ENCODE measurements at regions of chrX and their contacts with region 1.

Region 1: GRCh38 chrX:76172325-76172893 is 453 bp upstream of the PBDC1 start:
- DNase-seq: no peak
- ATAC-seq: peak; percentile 56
- H3K4me3 ChIP-seq: peak overlapping the region; percentile 74
- H3K4me3 Mint-ChIP-seq: peak overlapping the region; percentile 87 to 97 (median 92)
- H3K27ac ChIP-seq: peak overlapping the region; percentile 81
- H3K27ac Mint-ChIP-seq: peak overlapping the region; percentile 92 to 97 (median 95)
- H3K4me1 ChIP-seq: peaks cover 19 to 20% of the 10 kb centered on the region in 2 donors
- H3K4me1 Mint-ChIP-seq: peaks cover 25 to 52% (median 48%) of the 10 kb centered on the region in 7 donors
- H3K27me3 ChIP-seq: no peaks in the 10 kb centered on the region
- H3K27me3 Mint-ChIP-seq: no peaks in the 10 kb centered on the region

Region 2: DNA sequence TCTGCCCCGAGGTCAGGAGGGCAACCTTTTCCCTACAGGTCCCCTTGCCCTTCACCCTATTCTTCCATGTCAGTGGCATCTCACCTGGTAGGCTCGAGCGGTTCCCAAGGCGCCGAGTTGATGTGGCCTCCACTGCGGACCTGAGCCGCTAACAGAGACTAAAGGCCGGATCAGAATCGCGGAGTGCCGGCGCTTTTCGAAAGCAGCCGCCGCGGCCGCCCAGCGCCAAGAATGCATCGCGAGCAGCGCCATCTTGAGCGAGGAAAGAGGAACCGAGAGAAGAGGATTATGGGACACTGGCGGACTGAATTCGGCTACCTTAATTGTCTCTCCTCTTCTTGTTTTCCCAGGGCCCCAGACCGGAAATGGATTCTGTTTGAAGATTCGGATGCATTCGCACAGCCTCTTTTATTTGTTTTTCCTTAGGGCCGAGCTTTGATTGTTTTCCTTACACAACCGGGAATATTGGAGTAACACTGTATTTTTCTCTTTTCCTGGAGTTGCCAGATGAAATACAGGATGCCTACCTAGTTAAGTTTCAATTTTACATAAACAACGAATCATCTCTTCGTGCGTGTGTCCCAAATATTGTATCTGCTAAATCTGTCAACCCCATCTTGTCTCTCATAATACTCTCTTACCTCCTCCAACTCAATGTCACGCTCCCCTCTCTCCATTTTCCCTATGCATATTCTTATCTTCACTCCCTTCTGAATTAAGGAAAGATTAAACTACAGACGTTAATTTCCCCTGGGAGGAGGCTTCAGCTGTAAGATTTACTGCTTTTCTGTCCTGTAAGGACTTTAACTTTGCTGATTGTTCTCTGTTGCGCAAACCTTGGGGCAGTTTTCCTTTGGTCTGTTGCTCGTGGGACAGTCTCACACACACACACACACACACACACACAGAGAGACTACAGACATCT is 1016.1 kb before region 1 on chrX and contains the start of gene ABCB7:
- CTCF ChIA-PET with region 1: no interaction called
- POLR2A ChIA-PET with region 1: interaction called, 4 read pairs
- intact Hi-C with region 1: loop called in 1 of 2 experiments (anchors 5 kb)
- DNase-seq: peak; percentile 24 to 68 (median 59)
- ATAC-seq: peak; percentile 95
- H3K4me3 ChIP-seq: peak within 1 kb of the TSS; percentile 86
- H3K4me3 Mint-ChIP-seq: peak within 1 kb of the TSS; percentile 87 to 100 (median 95)
- H3K27ac ChIP-seq: peak within 1 kb of the TSS; percentile 75
- H3K27ac Mint-ChIP-seq: peak within 1 kb of the TSS; percentile 92 to 100 (median 96)
- H3K4me1 ChIP-seq: no peaks in the 10 kb centered on the region
- H3K4me1 Mint-ChIP-seq: peaks cover 10 to 63% (median 41%) of the 10 kb centered on the region in 7 donors
- H3K27me3 ChIP-seq: no peaks in the 10 kb centered on the region
- H3K27me3 Mint-ChIP-seq: no peaks in the 10 kb centered on the region
- total RNA-seq, gene ABCB7: 19.4 to 33.0 (median 26.3) TPM

Region 3: DNA sequence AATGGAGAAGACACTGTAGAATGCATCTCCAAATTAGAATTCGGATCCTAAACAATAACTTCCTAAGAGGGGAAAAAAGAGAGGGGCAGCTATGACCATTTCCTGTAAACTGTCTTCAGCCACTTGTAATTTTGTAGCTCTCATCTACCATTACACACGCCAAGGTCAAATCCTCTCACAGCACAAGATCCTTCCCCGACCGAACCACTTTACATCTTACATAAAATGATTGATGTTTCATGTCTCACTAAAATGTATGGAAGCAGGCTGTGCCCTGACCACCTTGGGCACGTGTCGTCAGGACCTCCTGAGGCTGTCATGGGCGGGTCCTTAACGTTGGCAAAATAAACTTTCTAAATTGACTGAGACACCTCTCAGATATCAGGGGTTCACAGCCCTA is 23.7 kb before region 1 on chrX:
- CTCF ChIA-PET with region 1: no interaction called
- POLR2A ChIA-PET with region 1: interaction called, 21 read pairs
- intact Hi-C with region 1: no loop called
- DNase-seq: peak in 8 of 9 donors; percentile 25 to 77 (median 63)
- ATAC-seq: peak; percentile 45
- H3K4me3 ChIP-seq: peak overlapping the region; percentile 32
- H3K4me3 Mint-ChIP-seq: peak overlapping the region; percentile 78 to 98 (median 88)
- H3K27ac ChIP-seq: peak overlapping the region; percentile 78
- H3K27ac Mint-ChIP-seq: peak overlapping the region; percentile 93 to 100 (median 99)
- H3K4me1 ChIP-seq: peaks cover 8 to 14% of the 10 kb centered on the region in 2 donors
- H3K4me1 Mint-ChIP-seq: peaks cover 2 to 29% (median 17%) of the 10 kb centered on the region in 7 donors
- H3K27me3 ChIP-seq: no peaks in the 10 kb centered on the region
- H3K27me3 Mint-ChIP-seq: no peaks in the 10 kb centered on the region

Region 4: DNA sequence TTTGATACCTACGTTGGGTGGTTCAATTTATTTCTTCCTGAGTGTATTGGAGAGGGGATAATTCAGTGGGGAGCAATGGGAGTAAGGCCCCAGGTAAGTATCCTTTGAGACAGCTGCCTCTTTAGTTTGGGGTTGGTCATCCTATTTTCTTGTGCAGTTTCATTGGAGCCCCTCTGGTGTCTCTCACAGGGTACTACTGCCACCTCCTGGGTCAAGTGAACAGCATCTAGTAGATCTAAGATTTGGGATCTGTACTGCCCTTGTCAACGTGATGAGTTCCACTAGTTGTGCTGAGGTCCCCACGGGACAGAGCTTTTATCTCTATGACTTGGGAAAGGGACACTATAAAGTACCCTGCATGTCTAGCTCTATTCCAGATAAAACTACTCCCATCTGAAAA is 81.0 kb after region 1 on chrX:
- CTCF ChIA-PET with region 1: interaction called, 3 read pairs
- POLR2A ChIA-PET with region 1: no interaction called
- intact Hi-C with region 1: loop called (anchors 5 kb)
- DNase-seq: peak; percentile 4 to 56 (median 26)
- ATAC-seq: peak; percentile 71
- H3K4me3 ChIP-seq: no peak overlapping the region
- H3K4me3 Mint-ChIP-seq: no peak overlapping the region
- H3K27ac ChIP-seq: no peak overlapping the region
- H3K27ac Mint-ChIP-seq: peak overlapping the region in 1 of 9 donors; percentile 11
- H3K4me1 ChIP-seq: no peaks in the 10 kb centered on the region
- H3K4me1 Mint-ChIP-seq: peaks cover 0 to 4% (median 0%) of the 10 kb centered on the region in 7 donors
- H3K27me3 ChIP-seq: no peaks in the 10 kb centered on the region
- H3K27me3 Mint-ChIP-seq: peaks cover 0 to 3% (median 0%) of the 10 kb centered on the region in 5 donors

Region 5: GRCh38 chrX:76427560-76428242 is 255.3 kb after region 1 on chrX and contains the start of gene MAGEE1:
- CTCF ChIA-PET with region 1: no interaction called
- POLR2A ChIA-PET with region 1: no interaction called
- intact Hi-C with region 1: loop called in 1 of 2 experiments (anchors 5 kb)
- DNase-seq: peak; percentile 66 to 80 (median 75)
- ATAC-seq: peak; percentile 91
- H3K4me3 ChIP-seq: peak within 1 kb of the TSS; percentile 81
- H3K4me3 Mint-ChIP-seq: peak within 1 kb of the TSS; percentile 85 to 95 (median 91)
- H3K27ac ChIP-seq: peak within 1 kb of the TSS; percentile 89
- H3K27ac Mint-ChIP-seq: peak within 1 kb of the TSS; percentile 86 to 96 (median 92)
- H3K4me1 ChIP-seq: peaks cover 0 to 12% of the 10 kb centered on the region in 2 donors
- H3K4me1 Mint-ChIP-seq: peaks cover 12 to 47% (median 41%) of the 10 kb centered on the region in 7 donors
- H3K27me3 ChIP-seq: no peaks in the 10 kb centered on the region
- H3K27me3 Mint-ChIP-seq: peaks cover 0 to 4% (median 0%) of the 10 kb centered on the region in 5 donors
- total RNA-seq, gene MAGEE1: 2.7 to 11.8 (median 10.7) TPM

Region 6: DNA sequence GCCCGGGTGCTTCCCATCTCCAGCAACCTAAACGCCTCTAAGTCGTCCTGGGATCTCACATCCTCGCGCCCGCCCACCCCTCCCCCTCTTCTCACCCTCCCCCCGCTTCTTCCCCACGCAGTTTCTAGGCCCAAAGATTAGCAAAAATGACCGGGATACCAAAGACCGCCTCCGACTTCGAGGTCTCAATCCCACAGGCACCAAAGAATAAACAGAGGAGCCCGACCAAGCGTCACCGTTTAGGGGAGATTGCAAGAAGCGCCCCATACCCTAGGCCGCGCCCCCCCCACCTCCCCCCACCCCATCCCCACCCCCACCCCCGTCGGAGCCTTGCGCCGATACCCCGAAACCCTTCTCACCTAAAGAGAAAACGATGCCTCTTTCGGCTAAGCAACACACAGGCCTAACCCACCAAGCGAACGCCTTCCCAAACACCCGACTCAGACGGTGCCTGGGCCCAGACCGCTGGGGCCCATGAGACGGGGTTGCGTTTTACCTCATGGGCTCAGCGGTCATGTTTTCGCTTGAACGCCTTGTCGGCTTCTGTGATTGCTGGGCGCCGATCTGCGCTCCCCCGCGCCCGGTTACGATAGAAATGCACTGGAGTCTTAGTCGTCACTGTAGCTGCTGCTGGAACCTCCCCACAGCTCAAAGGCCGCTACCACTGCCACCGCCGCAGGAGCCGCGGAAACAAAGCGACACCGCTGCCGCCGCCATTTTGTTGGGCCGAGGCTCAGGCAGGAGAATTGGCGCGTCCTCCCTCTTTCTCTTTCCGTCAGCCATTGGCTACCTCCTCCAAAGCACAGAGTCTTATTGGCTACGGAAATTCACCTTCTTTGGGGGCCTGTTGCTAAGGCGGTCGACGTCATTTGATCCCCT is 1613.3 kb after region 1 on chrX and contains the start of gene ATRX:
- CTCF ChIA-PET with region 1: no interaction called
- POLR2A ChIA-PET with region 1: no interaction called
- intact Hi-C with region 1: loop called in 1 of 2 experiments (anchors 10 kb)
- DNase-seq: peak; percentile 55 to 83 (median 79)
- ATAC-seq: peak; percentile 94
- H3K4me3 ChIP-seq: peak within 1 kb of the TSS; percentile 86
- H3K4me3 Mint-ChIP-seq: peak within 1 kb of the TSS; percentile 98 to 100 (median 100)
- H3K27ac ChIP-seq: peak within 1 kb of the TSS; percentile 93
- H3K27ac Mint-ChIP-seq: peak within 1 kb of the TSS; percentile 99 to 100 (median 100)
- H3K4me1 ChIP-seq: peaks cover 7 to 8% of the 10 kb centered on the region in 2 donors
- H3K4me1 Mint-ChIP-seq: peaks cover 0 to 46% (median 32%) of the 10 kb centered on the region in 7 donors
- H3K27me3 ChIP-seq: no peaks in the 10 kb centered on the region
- H3K27me3 Mint-ChIP-seq: no peaks in the 10 kb centered on the region
- total RNA-seq, gene ATRX: 90.1 to 126 (median 114) TPM

Measured in naive thymus-derived CD4-positive, alpha-beta T cell (primary cell).